Tibial artery (tissue), 4 donors: ENCODE measurements at regions of chr2 and their contacts with region 1.

Region 1: DNA sequence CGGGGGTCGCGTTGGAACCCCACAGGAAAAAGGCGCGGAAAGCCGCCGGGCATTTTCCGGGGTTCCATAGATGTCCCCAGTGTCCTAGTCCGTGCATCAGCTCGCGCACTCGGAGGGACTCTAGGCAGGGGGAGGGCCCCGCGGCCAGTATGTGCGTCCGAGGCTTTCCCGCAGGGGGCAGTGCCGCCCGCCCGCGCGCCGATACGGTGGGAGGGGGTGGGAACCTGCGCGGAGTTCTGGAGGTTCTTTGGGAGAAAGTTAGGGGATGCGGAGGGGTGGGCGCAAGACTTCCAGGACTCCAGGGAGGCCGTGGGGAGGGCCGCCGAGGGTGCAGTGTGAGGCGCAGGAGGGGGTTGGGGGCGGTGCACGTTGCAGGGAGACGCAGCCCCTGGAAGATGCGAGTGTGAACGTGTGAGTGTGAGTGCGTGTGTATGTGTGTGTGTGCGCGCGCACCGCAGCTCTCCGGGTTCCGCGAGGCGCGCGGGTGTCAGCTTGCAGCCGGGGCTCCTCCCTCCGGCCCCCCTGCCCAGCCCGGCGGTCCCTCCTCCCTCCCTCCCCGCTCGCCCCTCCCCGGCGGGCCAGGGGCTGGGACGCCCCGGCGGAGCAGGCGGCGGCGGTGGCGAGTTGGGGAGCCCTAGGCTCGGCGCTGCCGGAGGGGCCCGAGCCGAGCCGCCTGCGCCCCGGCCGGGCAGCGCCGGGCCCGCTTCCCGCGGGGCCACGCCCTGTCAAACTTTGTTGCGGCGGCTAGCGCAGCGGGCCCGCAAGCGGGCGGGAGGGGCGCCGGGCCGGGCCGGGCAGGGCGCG is at the start of gene TCF7L1:
- DNase-seq: peak; percentile 82 to 92
- H3K4me3 ChIP-seq: peak within 1 kb of the TSS; percentile 71 to 75
- H3K27ac ChIP-seq: peak within 1 kb of the TSS; percentile 81 to 88
- H3K4me1 ChIP-seq: peaks cover 0 to 49% (median 31%) of the 10 kb centered on the region in 4 donors
- H3K27me3 ChIP-seq: no peaks in the 10 kb centered on the region
- CTCF ChIP-seq: peak; percentile 90 to 92

Region 2: DNA sequence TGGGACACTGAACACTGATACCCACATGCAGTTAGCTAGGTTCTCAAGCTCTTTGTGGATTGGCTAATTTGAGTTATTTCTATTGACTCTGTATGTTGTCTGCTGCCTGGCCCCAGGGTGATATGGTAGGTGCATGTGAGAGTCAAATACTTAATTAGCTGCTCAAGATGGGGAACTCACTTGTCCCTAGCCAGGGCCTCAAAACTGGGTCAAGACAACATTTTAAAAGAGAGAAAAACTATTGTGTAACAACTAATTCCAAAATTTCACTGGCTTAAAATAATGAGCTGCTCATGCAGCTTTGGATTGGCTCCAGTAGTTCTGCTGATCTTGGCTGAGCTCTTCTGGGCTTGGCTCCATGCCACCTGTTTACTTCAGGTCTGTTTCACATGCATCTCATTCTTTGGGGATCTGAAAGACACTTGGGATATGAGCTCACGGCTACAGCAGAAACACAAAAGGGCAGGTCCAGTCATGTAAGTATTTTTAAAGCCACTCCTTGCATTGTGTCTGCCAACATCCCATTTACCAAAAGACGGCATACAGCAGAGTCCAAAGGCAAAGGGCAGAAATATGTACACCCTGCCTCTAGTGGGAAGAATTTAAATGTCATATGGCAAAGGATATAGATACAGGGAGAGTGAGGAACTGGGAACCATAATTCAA is 1390.8 kb before region 1 on chr2:
- intact Hi-C with region 1: no loop called
- DNase-seq: peak; percentile 32 to 60
- H3K4me3 ChIP-seq: no peak overlapping the region
- H3K27ac ChIP-seq: no peak overlapping the region
- H3K4me1 ChIP-seq: no peaks in the 10 kb centered on the region
- H3K27me3 ChIP-seq: no peaks in the 10 kb centered on the region
- CTCF ChIP-seq: no peak

Region 3: DNA sequence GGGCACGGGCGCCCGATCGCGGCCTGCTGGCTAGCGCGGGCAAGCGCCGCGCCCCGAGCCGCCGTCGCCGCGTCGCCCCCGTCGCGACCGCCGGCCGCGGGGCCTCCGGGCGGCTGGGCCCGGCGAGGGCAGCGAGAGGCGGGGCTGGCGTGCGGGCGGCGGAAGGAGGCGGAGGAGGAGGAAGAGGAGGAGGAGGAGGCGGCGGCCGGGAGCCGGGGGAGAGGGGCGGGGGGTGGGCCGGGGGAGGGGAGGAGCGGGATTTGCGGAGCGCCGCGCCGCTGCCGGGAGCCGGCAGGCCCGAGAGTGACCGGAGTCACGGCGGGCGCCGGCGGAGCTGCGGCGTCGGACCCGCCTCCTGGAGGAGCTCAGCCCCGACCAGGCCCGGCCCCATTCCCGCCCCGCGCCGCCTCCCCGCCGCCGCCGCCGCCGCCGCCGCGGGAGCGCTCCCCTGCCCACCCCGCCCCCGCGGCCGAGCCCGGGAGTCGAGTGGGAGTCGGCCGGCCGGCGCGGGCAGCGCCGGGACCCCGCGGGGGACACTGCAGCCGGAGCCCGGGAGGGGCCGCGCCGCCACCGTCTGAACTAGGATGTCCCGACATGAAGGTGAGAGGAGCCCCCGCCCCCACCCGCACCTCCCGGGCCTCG is 162.0 kb before region 1 on chr2 and contains the start of gene KCMF1:
- intact Hi-C with region 1: loop called (anchors 10 kb)
- DNase-seq: peak; percentile 74 to 86
- H3K4me3 ChIP-seq: peak within 1 kb of the TSS; percentile 75 to 85
- H3K27ac ChIP-seq: peak within 1 kb of the TSS; percentile 95 to 96
- H3K4me1 ChIP-seq: peaks cover 0 to 52% (median 32%) of the 10 kb centered on the region in 4 donors
- H3K27me3 ChIP-seq: no peaks in the 10 kb centered on the region
- CTCF ChIP-seq: no peak

Region 4: DNA sequence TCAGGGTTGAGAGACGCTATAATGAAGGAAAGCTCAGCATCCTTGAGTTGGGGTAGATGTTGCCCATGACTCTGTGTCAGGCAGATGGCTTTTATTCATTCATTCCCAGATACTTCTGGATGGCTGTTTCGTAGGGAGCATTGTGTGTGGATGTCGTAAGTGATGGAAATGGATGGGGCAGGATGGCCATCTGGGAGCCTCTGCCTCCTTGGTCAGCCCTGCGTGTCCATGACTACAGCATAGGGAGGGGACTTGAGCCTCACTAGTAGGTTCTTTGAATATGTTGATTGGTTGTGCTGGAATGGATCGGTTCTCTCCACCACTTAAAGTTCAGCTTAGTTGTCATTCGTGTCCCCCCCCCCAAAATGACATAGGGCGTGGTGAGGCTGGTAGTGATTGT is 149.9 kb after region 1 on chr2:
- intact Hi-C with region 1: loop called (anchors 1 kb)
- DNase-seq: no peak
- H3K4me3 ChIP-seq: no peak overlapping the region
- H3K27ac ChIP-seq: no peak overlapping the region
- H3K4me1 ChIP-seq: peaks cover 0 to 17% (median 12%) of the 10 kb centered on the region in 4 donors
- H3K27me3 ChIP-seq: no peaks in the 10 kb centered on the region
- CTCF ChIP-seq: no peak